Naive thymus-derived CD4-positive, alpha-beta T cell (primary cell): ENCODE measurements at regions of chr5 and their contacts with region 1.

Region 1: GRCh38 chr5:71455427-71456361 is at the start of gene BDP1:
- DNase-seq: peak; percentile 94 to 99 (median 97)
- ATAC-seq: peak; percentile 92
- H3K4me3 ChIP-seq: peak within 1 kb of the TSS; percentile 99
- H3K4me3 Mint-ChIP-seq: peak within 1 kb of the TSS; percentile 90 to 100 (median 98)
- H3K27ac ChIP-seq: peak within 1 kb of the TSS; percentile 87
- H3K27ac Mint-ChIP-seq: peak within 1 kb of the TSS; percentile 93 to 100 (median 99)
- H3K4me1 ChIP-seq: peaks cover 11 to 12% of the 10 kb centered on the region in 2 donors
- H3K4me1 Mint-ChIP-seq: peaks cover 17 to 40% (median 34%) of the 10 kb centered on the region in 7 donors
- H3K27me3 ChIP-seq: no peaks in the 10 kb centered on the region
- H3K27me3 Mint-ChIP-seq: peaks cover 2 to 10% (median 7%) of the 10 kb centered on the region in 5 donors
- total RNA-seq, gene BDP1: 35.3 to 48.7 (median 38.1) TPM

Region 2: GRCh38 chr5:71533614-71534013 is 77.9 kb after region 1 on chr5:
- CTCF ChIA-PET with region 1: no interaction called
- POLR2A ChIA-PET with region 1: no interaction called
- intact Hi-C with region 1: no loop called
- DNase-seq: peak in 5 of 9 donors; percentile 5 to 30 (median 13)
- ATAC-seq: peak; percentile 78
- H3K4me3 ChIP-seq: no peak overlapping the region
- H3K4me3 Mint-ChIP-seq: no peak overlapping the region
- H3K27ac ChIP-seq: no peak overlapping the region
- H3K27ac Mint-ChIP-seq: peak overlapping the region in 3 of 9 donors; percentile 47 to 72 (median 52)
- H3K4me1 ChIP-seq: no peaks in the 10 kb centered on the region
- H3K4me1 Mint-ChIP-seq: peaks cover 0 to 18% (median 12%) of the 10 kb centered on the region in 7 donors
- H3K27me3 ChIP-seq: no peaks in the 10 kb centered on the region
- H3K27me3 Mint-ChIP-seq: no peaks in the 10 kb centered on the region

Region 3: DNA sequence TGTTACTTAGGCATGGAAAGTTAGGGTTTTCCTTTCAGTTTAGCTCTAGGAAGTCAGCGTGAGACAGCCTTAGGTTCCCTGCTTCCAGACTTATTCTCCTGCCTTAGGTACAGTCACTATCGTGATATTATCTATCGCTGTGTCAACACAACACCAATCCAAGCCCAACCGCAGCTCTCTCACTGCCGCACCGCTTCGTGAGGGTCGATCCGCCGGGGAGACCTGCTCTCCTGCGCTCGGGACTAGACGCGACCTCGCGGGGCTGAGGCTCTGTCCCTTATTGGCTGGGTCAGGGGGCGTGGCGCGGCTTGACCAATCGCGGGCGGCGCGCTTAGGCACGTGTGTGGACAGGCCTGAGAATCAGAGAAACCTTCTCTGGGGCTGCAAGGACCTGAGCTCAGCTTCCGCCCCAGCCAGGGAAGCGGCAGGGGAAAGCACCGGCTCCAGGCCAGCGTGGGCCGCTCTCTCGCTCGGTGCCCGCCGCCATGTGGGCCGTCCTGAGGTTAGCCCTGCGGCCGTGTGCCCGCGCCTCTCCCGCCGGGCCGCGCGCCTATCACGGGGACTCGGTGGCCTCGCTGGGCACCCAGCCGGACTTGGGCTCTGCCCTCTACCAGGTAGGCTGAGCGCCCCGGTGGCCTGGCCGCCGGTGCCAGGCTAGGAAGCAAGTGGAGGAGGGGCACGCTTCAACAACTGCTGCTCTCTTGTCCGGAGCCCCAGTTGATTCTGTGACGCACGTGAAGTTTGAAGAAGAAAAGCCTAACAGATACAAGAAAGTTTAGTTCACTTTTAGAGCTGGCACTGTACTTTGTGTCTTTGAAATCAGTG is 131.5 kb after region 1 on chr5 and contains the start of gene MCCC2:
- CTCF ChIA-PET with region 1: no interaction called
- POLR2A ChIA-PET with region 1: interaction called, 3 read pairs
- intact Hi-C with region 1: loop called (anchors 1 kb)
- DNase-seq: peak; percentile 91 to 95 (median 95)
- ATAC-seq: peak; percentile 99
- H3K4me3 ChIP-seq: peak within 1 kb of the TSS; percentile 98
- H3K4me3 Mint-ChIP-seq: peak within 1 kb of the TSS; percentile 87 to 99 (median 94)
- H3K27ac ChIP-seq: peak within 1 kb of the TSS; percentile 87
- H3K27ac Mint-ChIP-seq: peak within 1 kb of the TSS; percentile 85 to 99 (median 97)
- H3K4me1 ChIP-seq: peaks cover 16 to 34% of the 10 kb centered on the region in 2 donors
- H3K4me1 Mint-ChIP-seq: peaks cover 26 to 49% (median 36%) of the 10 kb centered on the region in 7 donors
- H3K27me3 ChIP-seq: no peaks in the 10 kb centered on the region
- H3K27me3 Mint-ChIP-seq: no peaks in the 10 kb centered on the region
- total RNA-seq, gene MCCC2: 22.4 to 41.0 (median 29.8) TPM

Region 4: DNA sequence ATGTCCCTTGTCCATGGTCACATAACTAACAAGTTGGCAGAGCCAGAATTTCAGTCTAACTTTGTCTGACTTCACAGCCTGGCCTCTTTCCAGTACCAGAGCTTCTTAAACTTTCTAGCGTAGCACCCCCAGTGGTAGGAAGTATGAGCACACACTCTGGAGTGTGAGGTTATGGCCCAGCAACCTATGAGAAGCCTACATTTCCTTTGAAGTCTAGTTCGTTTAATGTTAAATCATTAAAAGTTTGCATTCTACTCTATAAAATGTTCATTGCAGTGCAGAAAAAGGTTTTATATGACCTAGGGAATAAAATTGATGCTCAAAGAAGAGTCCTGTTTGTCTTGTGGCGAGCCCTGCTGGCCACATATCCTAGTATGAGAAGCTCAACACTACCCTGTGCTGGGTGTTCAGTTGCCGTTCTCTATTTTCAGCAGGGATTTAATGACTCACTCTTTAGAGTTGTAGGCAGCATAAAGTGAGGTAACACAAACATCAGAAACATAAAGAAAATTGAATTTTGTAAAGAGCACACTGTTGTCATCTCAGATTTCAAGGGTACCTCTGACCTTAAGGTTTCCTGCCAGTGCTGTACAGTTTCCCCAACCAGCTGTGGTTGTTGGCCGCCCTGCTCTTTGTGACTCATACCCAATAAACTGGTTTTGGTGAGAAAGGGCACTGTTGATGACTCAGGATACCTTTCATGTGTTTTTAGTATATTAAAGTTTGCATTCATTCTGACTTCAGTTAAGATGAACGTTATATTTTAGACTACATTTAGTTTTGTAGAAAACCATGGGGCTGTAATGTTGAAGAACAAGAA is 145.7 kb after region 1 on chr5:
- CTCF ChIA-PET with region 1: no interaction called
- POLR2A ChIA-PET with region 1: interaction called, 3 read pairs
- intact Hi-C with region 1: loop called (anchors 1 kb)
- DNase-seq: peak in 8 of 9 donors; percentile 30 to 72 (median 54)
- ATAC-seq: peak; percentile 96
- H3K4me3 ChIP-seq: no peak overlapping the region
- H3K4me3 Mint-ChIP-seq: peak overlapping the region in 4 of 10 donors; percentile 3 to 69 (median 44)
- H3K27ac ChIP-seq: peak overlapping the region; percentile 19
- H3K27ac Mint-ChIP-seq: peak overlapping the region; percentile 8 to 87 (median 69)
- H3K4me1 ChIP-seq: peaks cover 14 to 24% of the 10 kb centered on the region in 2 donors
- H3K4me1 Mint-ChIP-seq: peaks cover 6 to 31% (median 17%) of the 10 kb centered on the region in 7 donors
- H3K27me3 ChIP-seq: no peaks in the 10 kb centered on the region
- H3K27me3 Mint-ChIP-seq: no peaks in the 10 kb centered on the region

Region 5: GRCh38 chr5:71757590-71758543 is 302.2 kb after region 1 on chr5:
- CTCF ChIA-PET with region 1: no interaction called
- POLR2A ChIA-PET with region 1: no interaction called
- intact Hi-C with region 1: loop called (anchors 5 kb)
- DNase-seq: peak in 7 of 9 donors; percentile 2 to 45 (median 18)
- ATAC-seq: peak; percentile 83
- H3K4me3 ChIP-seq: no peak overlapping the region
- H3K4me3 Mint-ChIP-seq: peak overlapping the region in 7 of 10 donors; percentile 23 to 75 (median 60)
- H3K27ac ChIP-seq: no peak overlapping the region
- H3K27ac Mint-ChIP-seq: peak overlapping the region in 1 of 9 donors; percentile 60
- H3K4me1 ChIP-seq: no peaks in the 10 kb centered on the region
- H3K4me1 Mint-ChIP-seq: peaks cover 3 to 13% (median 8%) of the 10 kb centered on the region in 7 donors
- H3K27me3 ChIP-seq: no peaks in the 10 kb centered on the region
- H3K27me3 Mint-ChIP-seq: peaks cover 0 to 11% (median 3%) of the 10 kb centered on the region in 5 donors

Region 6: GRCh38 chr5:72018146-72018803 is 562.6 kb after region 1 on chr5:
- CTCF ChIA-PET with region 1: no interaction called
- POLR2A ChIA-PET with region 1: no interaction called
- intact Hi-C with region 1: loop called in 1 of 2 experiments (anchors 5 kb)
- DNase-seq: peak in 8 of 9 donors; percentile 14 to 55 (median 36)
- ATAC-seq: peak; percentile 72
- H3K4me3 ChIP-seq: no peak overlapping the region
- H3K4me3 Mint-ChIP-seq: no peak overlapping the region
- H3K27ac ChIP-seq: no peak overlapping the region
- H3K27ac Mint-ChIP-seq: no peak overlapping the region
- H3K4me1 ChIP-seq: no peaks in the 10 kb centered on the region
- H3K4me1 Mint-ChIP-seq: peaks cover 0 to 1% (median 0%) of the 10 kb centered on the region in 7 donors
- H3K27me3 ChIP-seq: no peaks in the 10 kb centered on the region
- H3K27me3 Mint-ChIP-seq: peaks cover 4 to 43% (median 34%) of the 10 kb centered on the region in 5 donors

Region 7: DNA sequence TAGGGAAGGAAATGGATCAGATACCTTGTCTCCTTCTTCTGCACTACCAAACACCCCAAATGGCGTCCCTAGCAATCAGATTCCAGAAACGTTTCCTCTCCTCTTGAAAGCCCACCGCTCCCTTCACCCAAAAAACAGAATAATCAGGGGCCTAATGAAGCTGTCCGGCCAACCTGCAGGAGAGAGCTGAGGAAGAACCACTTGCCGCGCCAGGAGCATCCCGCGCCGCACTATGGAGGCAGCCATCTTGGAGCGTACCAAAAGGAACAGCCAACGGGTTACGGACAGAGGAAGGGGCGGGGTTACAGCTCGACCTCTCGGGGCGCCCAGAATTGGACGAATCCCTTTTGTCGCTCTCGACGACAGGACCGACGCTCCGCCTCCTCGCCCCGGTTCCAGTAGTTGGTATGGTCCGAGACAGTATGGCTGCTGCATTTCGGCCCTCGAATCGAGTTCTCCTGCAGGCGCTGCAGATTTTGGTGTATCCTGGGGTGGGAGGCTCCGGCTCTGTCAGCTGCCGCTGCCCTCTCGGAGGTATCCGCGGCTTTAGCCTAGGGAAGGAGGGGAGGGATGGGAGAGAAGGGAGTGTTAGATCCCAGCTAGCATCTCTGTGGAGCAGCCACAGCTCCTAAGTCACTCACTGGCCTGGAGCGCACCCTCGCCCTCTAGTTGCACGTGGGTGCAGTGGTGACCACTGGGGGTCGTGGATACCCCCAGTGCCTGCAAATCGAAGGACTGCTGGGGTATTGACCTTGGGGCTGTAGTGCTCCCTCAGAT is 864.5 kb after region 1 on chr5 and contains the starts of genes MRPS27 and PTCD2:
- CTCF ChIA-PET with region 1: no interaction called
- POLR2A ChIA-PET with region 1: no interaction called
- intact Hi-C with region 1: loop called in 1 of 2 experiments (anchors 1 kb)
- DNase-seq: peak; percentile 71 to 96 (median 94)
- ATAC-seq: peak; percentile 100
- H3K4me3 ChIP-seq: peak within 1 kb of the TSS; percentile 93
- H3K4me3 Mint-ChIP-seq: peak within 1 kb of the TSS; percentile 93 to 100 (median 98)
- H3K27ac ChIP-seq: peak within 1 kb of the TSS; percentile 89
- H3K27ac Mint-ChIP-seq: peak within 1 kb of the TSS; percentile 88 to 99 (median 95)
- H3K4me1 ChIP-seq: peaks cover 7 to 14% of the 10 kb centered on the region in 2 donors
- H3K4me1 Mint-ChIP-seq: peaks cover 24 to 65% (median 47%) of the 10 kb centered on the region in 7 donors
- H3K27me3 ChIP-seq: no peaks in the 10 kb centered on the region
- H3K27me3 Mint-ChIP-seq: no peaks in the 10 kb centered on the region
- total RNA-seq, gene MRPS27: 36.6 to 54.0 (median 39.5) TPM
- total RNA-seq, gene PTCD2: 5.0 to 12.6 (median 11.2) TPM